ENCODE measurements at regions of chr18 and their contacts with region 1.

Region 1: GRCh38 chr18:43571078-43571689 is 293.9 kb upstream of the SYT4 start:
- DNase-seq: no peak
- ATAC-seq: no peak

Region 2: GRCh38 chr18:43022873-43023272 is 548.3 kb before region 1 on chr18:
- intact Hi-C with region 1: loop called (anchors 5 kb)
- DNase-seq: no peak
- ATAC-seq: no peak